ENCODE measurements at regions of chr1 and their contacts with region 1.

Region 1: GRCh38 chr1:172826096-172826743 is 167.3 kb downstream of the FASLG start:
- DNase-seq: peak; percentile 80
- H3K4me3 ChIP-seq: no peak overlapping the region
- H3K27ac ChIP-seq: peak overlapping the region; percentile 72
- H3K4me1 ChIP-seq: peaks cover 8% of the 10 kb centered on the region
- H3K27me3 ChIP-seq: no peaks in the 10 kb centered on the region
- CTCF ChIP-seq: peak; percentile 50 to 51
- POLR2A ChIP-seq: no peak

Region 2: GRCh38 chr1:172487550-172487949 is 338.7 kb before region 1 on chr1:
- CTCF ChIA-PET with region 1: no interaction called
- POLR2A ChIA-PET with region 1: no interaction called
- dilution Hi-C with region 1: no loop called
- intact Hi-C with region 1: no loop called
- DNase-seq: no peak
- H3K4me3 ChIP-seq: no peak overlapping the region
- H3K27ac ChIP-seq: no peak overlapping the region
- H3K4me1 ChIP-seq: no peaks in the 10 kb centered on the region
- H3K27me3 ChIP-seq: peaks cover 22 to 57% of the 10 kb centered on the region in 2 experiments
- CTCF ChIP-seq: no peak
- POLR2A ChIP-seq: no peak

Region 3: DNA sequence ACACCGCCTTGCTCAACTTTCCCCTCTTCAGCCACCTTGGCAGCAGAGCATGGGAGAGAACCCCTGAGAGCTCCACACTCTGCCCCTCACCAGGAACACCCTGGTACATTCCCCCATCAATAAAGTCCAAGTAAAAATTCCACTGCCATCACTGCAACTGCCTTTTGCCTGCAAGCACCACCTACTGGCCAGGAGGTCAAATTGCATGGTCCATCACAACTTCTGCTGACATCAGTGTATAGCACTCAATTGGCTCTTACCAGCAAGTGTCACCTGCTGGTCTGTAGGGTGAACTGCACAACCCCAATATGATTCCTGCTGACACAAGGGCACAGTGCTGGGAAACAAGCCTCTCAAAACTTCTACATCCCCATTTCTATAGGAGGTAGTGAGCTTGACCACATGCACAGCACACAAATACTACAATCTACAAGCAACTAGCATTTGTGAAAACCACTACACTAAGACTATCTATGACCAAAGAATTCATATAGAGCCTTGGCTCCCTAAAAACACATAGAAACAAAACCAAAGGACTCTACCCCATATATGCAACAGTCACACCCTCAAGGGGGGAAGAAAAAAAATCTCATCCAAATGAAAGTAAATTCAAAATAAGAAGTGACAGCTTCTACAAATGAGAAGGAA is 98.1 kb before region 1 on chr1:
- CTCF ChIA-PET with region 1: no interaction called
- POLR2A ChIA-PET with region 1: no interaction called
- dilution Hi-C with region 1: no loop called
- intact Hi-C with region 1: no loop called
- DNase-seq: peak; percentile 9
- H3K4me3 ChIP-seq: no peak overlapping the region
- H3K27ac ChIP-seq: no peak overlapping the region
- H3K4me1 ChIP-seq: no peaks in the 10 kb centered on the region
- H3K27me3 ChIP-seq: no peaks in the 10 kb centered on the region
- CTCF ChIP-seq: peak; percentile 44 to 71
- POLR2A ChIP-seq: no peak

Region 4: GRCh38 chr1:172863031-172863430 is 36.8 kb after region 1 on chr1:
- CTCF ChIA-PET with region 1: interaction called, 7 read pairs
- POLR2A ChIA-PET with region 1: no interaction called
- dilution Hi-C with region 1: no loop called
- intact Hi-C with region 1: loop called (anchors 1 kb)
- DNase-seq: no peak
- H3K4me3 ChIP-seq: no peak overlapping the region
- H3K27ac ChIP-seq: no peak overlapping the region
- H3K4me1 ChIP-seq: peaks cover 17% of the 10 kb centered on the region
- H3K27me3 ChIP-seq: no peaks in the 10 kb centered on the region
- CTCF ChIP-seq: no peak
- POLR2A ChIP-seq: no peak

Region 5: GRCh38 chr1:172917972-172918371 is 91.8 kb after region 1 on chr1:
- CTCF ChIA-PET with region 1: interaction called, 11 read pairs
- POLR2A ChIA-PET with region 1: no interaction called
- dilution Hi-C with region 1: no loop called
- intact Hi-C with region 1: no loop called
- DNase-seq: peak; percentile 96
- H3K4me3 ChIP-seq: no peak overlapping the region
- H3K27ac ChIP-seq: peak overlapping the region; percentile 84
- H3K4me1 ChIP-seq: peaks cover 62% of the 10 kb centered on the region
- H3K27me3 ChIP-seq: no peaks in the 10 kb centered on the region
- CTCF ChIP-seq: no peak
- POLR2A ChIP-seq: peak; percentile 68

Region 6: GRCh38 chr1:172948457-172948856 is 122.2 kb after region 1 on chr1:
- CTCF ChIA-PET with region 1: interaction called, 13 read pairs
- POLR2A ChIA-PET with region 1: no interaction called
- dilution Hi-C with region 1: no loop called
- intact Hi-C with region 1: loop called (anchors 1 kb)
- DNase-seq: peak; percentile 89
- H3K4me3 ChIP-seq: no peak overlapping the region
- H3K27ac ChIP-seq: peak overlapping the region; percentile 95
- H3K4me1 ChIP-seq: peaks cover 36% of the 10 kb centered on the region
- H3K27me3 ChIP-seq: no peaks in the 10 kb centered on the region
- CTCF ChIP-seq: no peak
- POLR2A ChIP-seq: peak; percentile 25

Region 7: GRCh38 chr1:173043253-173043652 is 217.0 kb after region 1 on chr1:
- CTCF ChIA-PET with region 1: interaction called, 6 read pairs
- POLR2A ChIA-PET with region 1: no interaction called
- dilution Hi-C with region 1: no loop called
- intact Hi-C with region 1: loop called (anchors 2 kb)
- DNase-seq: peak; percentile 80
- H3K4me3 ChIP-seq: peak overlapping the region in 1 of 3 experiments; percentile 7
- H3K27ac ChIP-seq: peak overlapping the region; percentile 83
- H3K4me1 ChIP-seq: peaks cover 35% of the 10 kb centered on the region
- H3K27me3 ChIP-seq: no peaks in the 10 kb centered on the region
- CTCF ChIP-seq: no peak
- POLR2A ChIP-seq: no peak

Region 8: DNA sequence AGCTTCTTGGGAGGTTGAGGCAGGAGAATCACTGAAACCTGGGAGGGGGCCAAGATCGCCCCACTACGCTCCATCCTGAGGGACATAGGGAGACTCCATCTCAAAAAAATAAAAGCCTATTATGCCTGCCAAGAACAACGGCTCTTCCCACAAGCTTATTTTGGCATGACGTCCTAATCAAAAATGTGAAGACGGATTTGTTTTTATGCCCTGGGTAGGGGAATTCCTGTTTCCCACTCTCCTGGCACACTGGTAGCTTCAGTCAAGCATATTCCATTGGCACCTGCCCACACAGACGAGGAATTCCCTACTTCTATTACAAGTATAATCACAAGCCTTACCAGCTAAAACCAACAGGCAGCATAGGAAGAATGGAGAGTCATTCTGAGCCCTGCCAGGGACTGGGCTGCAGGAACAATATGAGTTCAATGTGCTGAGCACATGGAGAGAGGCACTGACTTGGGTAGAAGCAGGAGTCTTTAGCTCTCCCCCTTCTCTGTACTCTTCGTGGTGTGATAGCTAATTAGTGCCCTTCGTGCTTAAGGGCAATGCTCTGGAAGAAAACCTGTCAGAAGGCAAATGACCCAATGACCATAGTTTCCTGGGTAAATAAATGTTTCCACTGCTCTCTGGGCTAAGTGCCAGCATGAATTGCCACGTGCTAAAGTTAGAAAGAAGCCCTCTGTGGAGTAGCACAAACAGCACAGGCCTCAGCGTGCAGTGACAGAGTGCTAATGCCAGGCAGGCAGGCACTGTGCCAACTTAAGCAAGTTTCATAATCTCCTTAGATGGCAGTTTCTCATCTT is 364.1 kb after region 1 on chr1:
- CTCF ChIA-PET with region 1: interaction called, 19 read pairs
- POLR2A ChIA-PET with region 1: interaction called, 3 read pairs
- dilution Hi-C with region 1: no loop called
- intact Hi-C with region 1: no loop called
- DNase-seq: peak; percentile 99
- H3K4me3 ChIP-seq: no peak overlapping the region
- H3K27ac ChIP-seq: peak overlapping the region; percentile 98
- H3K4me1 ChIP-seq: peaks cover 58% of the 10 kb centered on the region
- H3K27me3 ChIP-seq: no peaks in the 10 kb centered on the region
- CTCF ChIP-seq: no peak
- POLR2A ChIP-seq: peak; percentile 35

Region 9: DNA sequence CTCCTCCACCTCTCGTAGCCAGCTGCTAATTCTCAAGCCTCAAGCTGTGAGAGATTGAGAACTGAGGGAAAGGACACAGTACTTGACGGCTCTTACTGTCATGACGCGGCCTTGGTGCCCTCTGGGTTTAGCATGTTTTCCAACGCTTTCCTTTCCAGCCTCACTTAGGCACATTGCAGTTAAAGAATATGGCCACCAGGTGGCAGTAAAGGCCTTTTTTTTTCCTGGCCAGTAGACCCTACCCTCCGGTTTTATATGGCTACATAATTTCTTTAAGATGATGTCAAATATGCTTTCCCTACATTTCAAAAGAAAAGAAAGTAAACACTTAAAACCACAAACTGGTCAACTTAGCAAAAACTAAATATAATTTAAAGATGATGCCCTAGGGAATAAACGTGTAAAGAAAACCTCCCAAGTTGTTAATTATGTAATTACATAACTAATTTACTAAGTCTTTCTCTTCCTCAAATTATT is 594.1 kb after region 1 on chr1:
- CTCF ChIA-PET with region 1: interaction called, 4 read pairs
- POLR2A ChIA-PET with region 1: no interaction called
- dilution Hi-C with region 1: no loop called
- intact Hi-C with region 1: loop called (anchors 1 kb)
- DNase-seq: peak; percentile 83
- H3K4me3 ChIP-seq: no peak overlapping the region
- H3K27ac ChIP-seq: no peak overlapping the region
- H3K4me1 ChIP-seq: peaks cover 5% of the 10 kb centered on the region
- H3K27me3 ChIP-seq: no peaks in the 10 kb centered on the region
- CTCF ChIP-seq: peak; percentile 63 to 76
- POLR2A ChIP-seq: no peak